RWPE1 (cell line): ENCODE measurements at regions of chr9 and their contacts with region 1.

Region 1: DNA sequence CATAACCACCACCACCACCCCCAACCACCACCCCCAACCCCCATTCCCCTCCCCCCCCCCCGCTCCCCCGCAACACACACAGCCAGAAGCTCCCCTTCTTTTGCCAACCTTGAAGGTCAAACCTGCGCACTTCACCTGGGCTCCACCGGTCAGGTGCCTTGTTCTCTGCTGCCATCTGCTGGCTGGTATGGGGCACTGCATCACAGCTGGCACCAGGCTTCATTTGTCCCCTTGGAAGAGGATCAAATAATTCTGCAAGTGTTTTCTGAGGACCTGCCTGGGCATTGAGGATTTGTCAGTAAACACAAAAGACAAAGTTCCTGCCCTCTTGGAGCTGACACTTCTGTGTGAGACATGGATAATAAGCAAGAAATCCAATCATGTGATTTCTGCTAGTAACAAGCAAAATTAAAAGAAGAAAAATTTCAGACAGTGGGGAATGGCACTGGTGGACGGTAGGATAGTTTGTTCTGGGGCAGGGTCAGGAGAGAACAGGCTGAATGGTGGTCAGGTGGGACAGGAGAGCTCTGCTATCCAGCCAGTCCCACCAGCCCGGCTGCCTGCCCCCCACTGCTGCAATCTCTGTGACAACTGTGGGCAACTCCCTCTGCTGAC is 55.6 kb upstream of the LMX1B start:
- DNase-seq: peak; percentile 92
- H3K27ac ChIP-seq: no peak overlapping the region
- CTCF ChIP-seq: peak; percentile 99

Region 2: GRCh38 chr9:126293522-126293889 is 264.7 kb before region 1 on chr9:
- CTCF ChIA-PET with region 1: no interaction called
- POLR2A ChIA-PET with region 1: no interaction called
- DNase-seq: no peak
- H3K27ac ChIP-seq: no peak overlapping the region
- CTCF ChIP-seq: no peak; the same call in 1 of the 2 replicates

Region 3: GRCh38 chr9:126500684-126501382 is 57.3 kb before region 1 on chr9:
- CTCF ChIA-PET with region 1: interaction called, 299 read pairs
- POLR2A ChIA-PET with region 1: no interaction called
- DNase-seq: peak; percentile 90
- H3K27ac ChIP-seq: no peak overlapping the region
- CTCF ChIP-seq: peak; percentile 99

Region 4: DNA sequence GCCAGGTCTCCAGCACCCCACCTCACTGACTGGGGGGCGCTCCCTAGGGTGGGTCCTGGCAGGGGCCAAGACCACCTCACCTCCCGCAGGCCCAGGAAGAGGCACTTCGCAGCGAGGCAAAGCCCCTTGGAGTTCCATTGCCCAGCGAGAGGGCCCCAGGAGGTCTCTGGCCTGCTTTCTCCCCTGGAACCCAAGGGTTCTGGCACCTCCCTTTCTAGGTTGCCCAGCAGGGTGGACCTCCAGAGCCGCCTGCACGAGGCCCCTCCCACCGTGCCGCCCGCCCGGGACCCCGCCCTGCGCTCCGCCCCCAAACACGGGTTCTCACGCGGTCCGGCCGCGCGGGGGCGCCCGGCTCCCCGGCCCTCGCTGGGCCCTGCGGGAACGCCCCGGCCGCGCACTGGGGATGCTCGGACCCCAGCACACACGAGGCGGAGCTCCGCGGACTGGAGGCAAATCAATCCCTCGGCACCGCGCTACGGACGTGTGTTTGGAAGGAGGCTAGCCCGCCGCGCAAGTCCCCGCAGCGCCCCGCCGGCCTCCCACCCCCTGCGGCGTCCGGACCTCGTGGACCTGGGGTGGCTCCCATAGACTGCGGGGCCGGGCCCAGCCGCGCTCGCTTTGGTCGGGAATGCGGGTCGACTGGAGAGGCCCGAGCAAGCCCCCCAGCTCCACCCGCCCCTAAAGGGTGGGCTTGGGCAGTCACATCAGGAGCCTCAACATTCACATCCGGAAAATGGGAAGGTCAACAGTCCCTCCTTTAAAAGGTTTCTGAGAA is 43.9 kb before region 1 on chr9:
- CTCF ChIA-PET with region 1: interaction called, 52 read pairs
- POLR2A ChIA-PET with region 1: no interaction called
- DNase-seq: peak; percentile 69
- H3K27ac ChIP-seq: no peak overlapping the region
- CTCF ChIP-seq: peak; percentile 60; the same call in 1 of the 2 replicates

Region 5: GRCh38 chr9:126532019-126532462 is 26.1 kb before region 1 on chr9:
- CTCF ChIA-PET with region 1: interaction called, 14 read pairs
- POLR2A ChIA-PET with region 1: no interaction called
- DNase-seq: no peak
- H3K27ac ChIP-seq: no peak overlapping the region
- CTCF ChIP-seq: no peak